ENCODE measurements at regions of chr19 and their contacts with region 1.

Region 1: GRCh38 chr19:47514869-47515588 is at the start of gene NAPA:
- DNase-seq: peak; percentile 100
- ATAC-seq: peak; percentile 97
- H3K4me3 ChIP-seq: peak within 1 kb of the TSS; percentile 87
- H3K27ac ChIP-seq: peak within 1 kb of the TSS; percentile 90
- H3K4me1 ChIP-seq: peaks cover 18% of the 10 kb centered on the region
- H3K27me3 ChIP-seq: peaks cover 2% of the 10 kb centered on the region; the same call in 1 of the 2 replicates
- CTCF ChIP-seq: no peak; the same call in 1 of the 2 replicates
- POLR2A ChIP-seq: peak; percentile 96
- RAD21 ChIP-seq: peak; percentile 68
- total RNA-seq, gene NAPA: 51.7 and 76.4 TPM in 2 replicates

Region 2: DNA sequence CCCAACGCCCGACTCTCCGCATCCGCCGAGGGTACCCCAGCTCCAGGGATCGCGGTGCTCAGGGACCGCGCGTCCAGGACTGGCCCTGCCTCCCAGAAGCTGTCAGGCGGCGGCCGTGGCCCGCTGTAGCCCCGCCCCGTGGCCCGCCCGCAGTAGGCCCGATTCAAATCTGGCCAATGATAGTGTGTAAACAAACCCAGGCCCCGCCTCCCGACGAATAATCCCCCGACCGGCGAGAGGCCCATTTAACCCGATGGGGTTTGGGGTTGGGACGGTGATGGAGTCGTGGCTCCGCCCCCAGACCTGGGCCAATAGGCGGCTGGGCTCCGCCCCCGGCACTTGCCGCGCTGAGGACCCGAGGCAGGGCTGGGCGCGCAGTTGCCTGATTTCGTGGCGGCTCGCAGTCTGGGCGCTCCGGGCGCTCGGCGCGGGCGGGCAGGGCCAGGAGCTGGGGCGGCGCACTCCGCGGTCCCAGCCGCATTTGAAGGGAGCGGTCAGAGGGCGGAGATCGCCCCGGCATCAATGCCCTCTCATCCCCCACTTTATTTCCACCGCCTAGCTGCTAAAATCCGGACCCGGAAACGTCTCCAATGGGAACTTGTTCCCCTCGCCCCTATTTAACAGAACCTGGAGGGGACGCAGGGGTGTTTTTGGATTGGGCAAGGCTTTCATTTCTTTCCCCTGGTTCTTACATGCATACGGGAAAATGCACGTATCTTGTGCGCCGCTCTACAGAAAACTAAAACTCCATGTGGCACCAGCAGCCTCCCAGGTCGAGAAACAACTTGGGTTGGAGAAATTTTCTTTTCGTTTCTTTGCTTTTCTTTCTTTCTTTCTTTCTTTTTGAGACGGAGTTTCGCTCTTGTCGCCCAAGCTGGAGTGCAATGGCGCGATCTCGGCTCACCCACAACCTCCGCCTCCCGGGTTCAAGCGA is 85.5 kb after region 1 on chr19:
- CTCF ChIA-PET with region 1: interaction called, 8 read pairs
- POLR2A ChIA-PET with region 1: no interaction called
- dilution Hi-C with region 1: no loop called
- in situ Hi-C with region 1: no loop called
- intact Hi-C with region 1: loop called (anchors 1 kb)
- DNase-seq: peak; percentile 98
- ATAC-seq: peak; percentile 95
- H3K4me3 ChIP-seq: peak overlapping the region; percentile 59
- H3K27ac ChIP-seq: peak overlapping the region; percentile 83
- H3K4me1 ChIP-seq: peaks cover 3% of the 10 kb centered on the region; the same call in 1 of the 2 replicates
- H3K27me3 ChIP-seq: no peaks in the 10 kb centered on the region
- CTCF ChIP-seq: no peak
- POLR2A ChIP-seq: peak; percentile 86
- RAD21 ChIP-seq: no peak; the same call in none of the 2 replicates

Region 3: DNA sequence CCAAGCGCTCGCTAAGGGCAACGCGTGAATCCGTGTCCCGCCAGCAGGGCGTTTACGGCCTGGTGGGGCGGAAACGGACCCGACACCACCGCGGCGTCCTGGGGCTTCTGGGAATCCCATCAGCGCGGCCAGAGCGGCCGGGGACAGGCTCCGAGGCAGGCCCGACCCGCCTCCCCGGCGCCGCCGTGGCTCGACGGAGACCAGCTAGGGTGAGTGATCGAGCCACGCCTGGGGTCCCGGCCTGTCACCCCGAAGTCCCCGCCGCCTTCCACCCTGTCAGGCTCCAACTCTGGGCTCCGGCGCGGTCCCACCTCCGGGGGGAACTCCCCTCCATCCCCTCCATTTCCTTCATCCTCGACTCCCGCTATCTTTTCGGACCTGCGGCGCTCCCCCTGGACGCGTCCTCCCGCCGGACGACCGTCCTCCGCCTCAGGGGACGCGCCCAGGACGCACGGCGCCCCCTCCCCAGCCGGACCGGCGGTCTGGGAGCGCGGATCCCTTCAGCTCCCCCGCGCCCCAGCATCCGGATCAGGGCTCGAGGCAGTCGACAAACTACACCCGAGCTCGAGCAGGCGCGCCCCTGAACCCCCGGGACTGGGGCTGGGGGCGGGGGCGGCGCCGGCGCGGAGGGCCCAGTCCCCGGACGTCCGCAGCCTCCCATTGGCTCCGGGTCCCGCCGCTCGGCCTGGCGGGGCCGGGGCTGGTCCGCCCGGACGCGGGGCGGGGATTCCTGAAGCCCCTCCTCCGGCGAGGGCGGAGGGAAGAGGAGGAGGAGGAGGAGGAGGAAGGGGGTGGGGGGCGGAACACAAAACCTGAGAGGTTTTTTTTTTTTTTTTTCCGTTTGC is 93.3 kb after region 1 on chr19:
- CTCF ChIA-PET with region 1: interaction called, 8 read pairs
- POLR2A ChIA-PET with region 1: interaction called, 4 read pairs
- dilution Hi-C with region 1: no loop called
- in situ Hi-C with region 1: no loop called
- intact Hi-C with region 1: loop called (anchors 1 kb)
- DNase-seq: peak; percentile 90
- ATAC-seq: peak; percentile 94
- H3K4me3 ChIP-seq: peak overlapping the region; percentile 95
- H3K27ac ChIP-seq: peak overlapping the region; percentile 98
- H3K4me1 ChIP-seq: peaks cover 15% of the 10 kb centered on the region
- H3K27me3 ChIP-seq: no peaks in the 10 kb centered on the region
- CTCF ChIP-seq: peak; percentile 30; the same call in 1 of the 2 replicates
- POLR2A ChIP-seq: peak; percentile 80
- RAD21 ChIP-seq: peak; percentile 26

Region 4: GRCh38 chr19:47663841-47664771 is 149.1 kb after region 1 on chr19:
- CTCF ChIA-PET with region 1: no interaction called
- POLR2A ChIA-PET with region 1: no interaction called
- dilution Hi-C with region 1: no loop called
- in situ Hi-C with region 1: no loop called
- intact Hi-C with region 1: loop called (anchors 10 kb)
- DNase-seq: peak; percentile 99
- ATAC-seq: peak; percentile 80
- H3K4me3 ChIP-seq: no peak overlapping the region; the same call in 1 of the 2 replicates
- H3K27ac ChIP-seq: peak overlapping the region; percentile 83
- H3K4me1 ChIP-seq: peaks cover 35% of the 10 kb centered on the region
- H3K27me3 ChIP-seq: no peaks in the 10 kb centered on the region
- CTCF ChIP-seq: no peak
- POLR2A ChIP-seq: no peak
- RAD21 ChIP-seq: peak; percentile 17; the same call in 1 of the 2 replicates

Measured in IMR-90 (cell line).